CD4-positive, alpha-beta memory T cell (primary cell): ENCODE measurements at regions of chr2 and their contacts with region 1.

Region 1: DNA sequence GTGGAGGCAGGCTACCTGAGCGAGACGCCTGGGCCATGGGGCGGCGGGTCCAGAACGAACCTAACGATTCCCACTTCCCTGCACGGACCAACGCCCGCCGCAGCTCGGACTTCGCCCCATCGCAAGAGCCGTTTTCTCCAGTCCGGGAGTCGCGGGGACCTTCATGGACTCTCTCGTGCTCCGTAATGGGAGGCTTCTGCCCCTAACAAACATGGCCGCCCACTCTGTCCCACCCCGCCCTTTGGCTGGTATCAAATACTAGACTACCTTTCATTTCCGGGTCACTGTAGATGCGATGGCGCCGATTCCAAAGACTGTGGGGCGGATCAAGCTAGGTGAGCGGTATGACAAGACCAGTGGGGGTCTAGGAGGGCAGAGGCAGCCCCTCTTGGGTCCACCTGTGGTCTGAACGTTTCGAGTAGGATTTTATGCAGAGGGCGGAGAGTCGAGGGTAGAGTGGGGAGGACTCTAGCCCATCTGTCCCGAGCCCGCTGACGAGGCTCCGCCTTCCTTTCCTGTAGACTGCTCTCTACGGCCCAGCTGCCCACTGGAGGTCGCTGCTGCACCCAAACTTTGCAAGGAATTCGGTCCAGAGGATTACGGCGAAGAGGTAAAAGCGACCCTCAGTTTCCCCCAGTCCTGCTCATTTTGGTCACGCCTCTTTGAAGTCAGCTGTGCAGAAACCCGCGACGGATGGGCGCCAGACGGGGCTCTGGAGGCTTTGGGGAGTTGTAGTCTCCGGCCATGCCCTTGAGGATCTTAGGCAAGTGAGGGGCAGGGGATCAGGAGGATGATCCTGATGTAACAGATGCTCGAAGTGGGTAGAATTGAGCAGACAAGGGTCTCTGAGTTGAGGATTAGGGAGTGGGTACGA is at the starts of genes CCDC142 and TTC31:
- DNase-seq: peak; percentile 94 to 98 (median 96)
- H3K4me3 ChIP-seq: peak within 1 kb of the TSS; percentile 57 to 100
- H3K4me3 Mint-ChIP-seq: peak within 1 kb of the TSS; percentile 99 to 100 (median 100)
- H3K27ac ChIP-seq: peak within 1 kb of the TSS; percentile 91
- H3K27ac Mint-ChIP-seq: peak within 1 kb of the TSS; percentile 91 to 100 (median 100)
- H3K4me1 ChIP-seq: peaks cover 28% of the 10 kb centered on the region
- H3K4me1 Mint-ChIP-seq: peaks cover 17 to 43% (median 25%) of the 10 kb centered on the region in 4 donors
- H3K27me3 ChIP-seq: no peaks in the 10 kb centered on the region
- H3K27me3 Mint-ChIP-seq: no peaks in the 10 kb centered on the region
- total RNA-seq, gene CCDC142: 63.9 to 67.6 TPM
- total RNA-seq, gene TTC31: 43.7 to 46.9 TPM

Region 2: DNA sequence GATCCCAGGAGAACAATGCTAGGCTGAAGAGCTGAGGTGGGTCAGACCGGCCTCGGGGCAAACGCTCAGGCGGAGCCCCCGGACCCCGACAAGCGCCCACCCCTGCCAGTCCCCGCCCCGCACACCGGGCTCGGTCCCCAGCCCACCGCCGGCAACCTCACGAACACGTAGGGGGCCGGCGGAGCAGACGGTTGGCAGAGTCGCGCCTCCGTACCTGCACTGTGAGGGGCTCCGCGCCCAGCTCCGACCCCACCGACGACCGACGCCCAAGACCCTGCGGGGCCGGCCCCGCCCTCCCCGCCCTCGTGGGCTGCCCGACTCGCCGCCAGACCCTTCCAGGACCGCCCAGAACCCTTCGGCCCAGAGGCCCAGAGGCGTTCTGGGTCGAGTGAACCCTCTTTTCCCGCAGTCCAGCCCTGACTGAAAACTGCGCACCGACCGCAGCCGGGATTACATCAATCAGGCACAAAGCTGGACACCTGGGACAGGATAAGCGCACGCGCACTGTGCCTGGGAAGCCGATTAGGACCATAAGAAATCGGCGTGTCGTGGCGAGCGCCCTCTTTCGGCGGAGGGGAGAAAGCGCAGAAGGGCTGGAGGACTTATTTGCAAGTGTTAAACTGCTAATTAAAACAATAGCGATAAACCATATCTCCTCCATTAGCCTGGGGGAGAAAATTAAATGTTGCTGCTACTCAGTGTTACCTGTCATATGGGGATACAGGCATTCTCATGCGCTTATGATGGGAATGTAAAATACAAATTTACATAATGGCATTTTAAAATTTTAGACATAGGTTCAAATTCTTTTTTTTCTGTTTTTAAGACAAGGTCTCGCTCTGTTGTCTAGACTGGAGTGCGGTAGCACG is 91.2 kb before region 1 on chr2:
- CTCF ChIA-PET with region 1: no interaction called
- POLR2A ChIA-PET with region 1: interaction called, 5 read pairs
- intact Hi-C with region 1: loop called (anchors 1 kb)
- DNase-seq: peak; percentile 92 to 96 (median 94)
- H3K4me3 ChIP-seq: peak overlapping the region; percentile 84 to 90
- H3K4me3 Mint-ChIP-seq: peak overlapping the region in 5 of 8 donors; percentile 96 to 99 (median 97)
- H3K27ac ChIP-seq: peak overlapping the region; percentile 88
- H3K27ac Mint-ChIP-seq: peak overlapping the region in 6 of 7 donors; percentile 99 to 100 (median 100)
- H3K4me1 ChIP-seq: peaks cover 27% of the 10 kb centered on the region
- H3K4me1 Mint-ChIP-seq: peaks cover 5 to 13% (median 6%) of the 10 kb centered on the region in 4 donors
- H3K27me3 ChIP-seq: no peaks in the 10 kb centered on the region
- H3K27me3 Mint-ChIP-seq: peaks cover 0 to 5% of the 10 kb centered on the region in 2 donors

Region 3: DNA sequence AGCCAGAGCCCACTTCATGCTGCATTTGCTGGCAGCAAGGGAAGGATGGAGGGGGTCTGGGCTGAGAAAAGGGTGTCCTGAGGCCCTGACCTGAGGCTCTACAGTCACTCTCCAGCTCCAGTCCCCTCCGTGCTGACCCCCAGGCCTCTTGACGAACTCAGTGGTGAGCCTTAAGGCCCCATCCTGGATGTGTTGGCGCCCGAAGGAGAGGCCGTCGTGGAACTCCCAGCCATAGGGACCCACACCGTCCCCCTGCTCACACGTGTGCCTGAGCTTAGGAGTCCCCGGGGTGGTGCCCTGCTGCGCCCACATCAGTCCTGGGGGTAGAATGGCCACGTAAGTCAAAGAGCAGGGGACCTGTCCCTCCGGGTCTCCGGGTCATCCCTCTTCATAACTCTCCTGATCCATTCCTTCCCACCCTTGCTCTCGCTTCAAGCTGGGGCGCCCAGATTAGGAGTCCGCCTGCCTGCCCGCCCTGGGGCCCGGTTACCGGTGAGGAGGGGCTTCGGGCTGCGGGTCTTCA is 18.6 kb before region 1 on chr2:
- CTCF ChIA-PET with region 1: interaction called, 19 read pairs
- POLR2A ChIA-PET with region 1: interaction called, 516 read pairs
- intact Hi-C with region 1: no loop called
- DNase-seq: no peak
- H3K4me3 ChIP-seq: peak overlapping the region; percentile 52 to 88
- H3K4me3 Mint-ChIP-seq: peak overlapping the region; percentile 77 to 98 (median 92)
- H3K27ac ChIP-seq: peak overlapping the region; percentile 90
- H3K27ac Mint-ChIP-seq: peak overlapping the region; percentile 74 to 99 (median 81)
- H3K4me1 ChIP-seq: peaks cover 26% of the 10 kb centered on the region
- H3K4me1 Mint-ChIP-seq: peaks cover 12 to 36% (median 25%) of the 10 kb centered on the region in 4 donors
- H3K27me3 ChIP-seq: no peaks in the 10 kb centered on the region
- H3K27me3 Mint-ChIP-seq: no peaks in the 10 kb centered on the region

Region 4: GRCh38 chr2:74507145-74507925 is 24.3 kb after region 1 on chr2 and contains the start of gene PCGF1:
- CTCF ChIA-PET with region 1: interaction called, 9 read pairs
- POLR2A ChIA-PET with region 1: interaction called, 60 read pairs
- intact Hi-C with region 1: loop called (anchors 1 kb)
- DNase-seq: peak; percentile 98 to 99 (median 98)
- H3K4me3 ChIP-seq: peak within 1 kb of the TSS; percentile 83 to 97
- H3K4me3 Mint-ChIP-seq: peak within 1 kb of the TSS; percentile 98 to 100 (median 100)
- H3K27ac ChIP-seq: peak within 1 kb of the TSS; percentile 98
- H3K27ac Mint-ChIP-seq: peak within 1 kb of the TSS; percentile 97 to 100 (median 100)
- H3K4me1 ChIP-seq: peaks cover 40% of the 10 kb centered on the region
- H3K4me1 Mint-ChIP-seq: peaks cover 18 to 64% (median 46%) of the 10 kb centered on the region in 4 donors
- H3K27me3 ChIP-seq: peaks cover 19% of the 10 kb centered on the region
- H3K27me3 Mint-ChIP-seq: peaks cover 16 to 45% of the 10 kb centered on the region in 2 donors
- total RNA-seq, gene PCGF1: 31.1 to 42.2 TPM

Region 5: DNA sequence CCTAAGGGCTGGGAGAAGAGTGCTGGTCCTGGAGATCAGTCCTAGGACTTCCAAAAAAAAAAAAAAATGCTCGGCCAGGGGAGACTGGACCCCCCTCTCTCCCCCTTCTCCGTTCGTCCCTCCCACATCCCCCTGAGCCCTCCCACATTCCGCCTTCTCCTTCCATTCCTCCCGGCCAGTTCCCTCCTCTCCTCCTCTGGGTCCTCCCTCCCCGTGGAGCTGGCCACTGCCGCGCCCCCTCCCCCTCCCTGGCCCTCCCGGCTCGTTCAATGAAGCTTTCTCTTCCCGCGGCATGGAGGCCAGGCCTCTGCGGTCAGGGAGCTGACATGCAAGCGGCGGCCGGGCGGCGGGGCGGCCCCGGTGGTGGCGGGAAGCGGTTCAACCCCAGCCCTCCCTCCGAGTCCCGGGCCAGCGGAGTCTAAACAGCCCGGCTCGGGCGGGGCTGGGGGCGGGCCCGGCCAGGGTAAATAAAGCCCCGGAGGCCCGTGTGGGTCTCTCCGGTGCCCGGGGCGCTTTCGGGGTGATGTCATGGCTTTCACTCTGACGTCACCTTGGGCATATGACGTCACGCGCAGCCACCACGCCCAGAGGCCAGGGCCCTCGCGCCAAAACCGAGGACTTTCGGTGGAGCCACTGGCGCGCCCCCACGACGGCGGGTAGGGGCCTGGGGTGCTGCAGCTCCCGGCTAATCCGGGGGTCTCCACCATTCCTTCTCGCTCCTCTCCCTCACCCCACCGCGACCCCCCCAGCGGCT is 71.0 kb after region 1 on chr2 and contains the start of gene LOXL3:
- CTCF ChIA-PET with region 1: no interaction called
- POLR2A ChIA-PET with region 1: interaction called, 4 read pairs
- intact Hi-C with region 1: loop called (anchors 2 kb)
- DNase-seq: peak; percentile 79 to 84 (median 82)
- H3K4me3 ChIP-seq: peak within 1 kb of the TSS; percentile 84 to 99
- H3K4me3 Mint-ChIP-seq: peak within 1 kb of the TSS; percentile 94 to 98 (median 96)
- H3K27ac ChIP-seq: peak within 1 kb of the TSS; percentile 64
- H3K27ac Mint-ChIP-seq: peak within 1 kb of the TSS; percentile 73 to 98 (median 93)
- H3K4me1 ChIP-seq: peaks cover 23% of the 10 kb centered on the region
- H3K4me1 Mint-ChIP-seq: peaks cover 7 to 35% (median 19%) of the 10 kb centered on the region in 4 donors
- H3K27me3 ChIP-seq: peaks cover 16% of the 10 kb centered on the region
- H3K27me3 Mint-ChIP-seq: peaks cover 11 to 25% of the 10 kb centered on the region in 2 donors
- total RNA-seq, gene LOXL3: 0.25 to 0.32 TPM

Region 6: DNA sequence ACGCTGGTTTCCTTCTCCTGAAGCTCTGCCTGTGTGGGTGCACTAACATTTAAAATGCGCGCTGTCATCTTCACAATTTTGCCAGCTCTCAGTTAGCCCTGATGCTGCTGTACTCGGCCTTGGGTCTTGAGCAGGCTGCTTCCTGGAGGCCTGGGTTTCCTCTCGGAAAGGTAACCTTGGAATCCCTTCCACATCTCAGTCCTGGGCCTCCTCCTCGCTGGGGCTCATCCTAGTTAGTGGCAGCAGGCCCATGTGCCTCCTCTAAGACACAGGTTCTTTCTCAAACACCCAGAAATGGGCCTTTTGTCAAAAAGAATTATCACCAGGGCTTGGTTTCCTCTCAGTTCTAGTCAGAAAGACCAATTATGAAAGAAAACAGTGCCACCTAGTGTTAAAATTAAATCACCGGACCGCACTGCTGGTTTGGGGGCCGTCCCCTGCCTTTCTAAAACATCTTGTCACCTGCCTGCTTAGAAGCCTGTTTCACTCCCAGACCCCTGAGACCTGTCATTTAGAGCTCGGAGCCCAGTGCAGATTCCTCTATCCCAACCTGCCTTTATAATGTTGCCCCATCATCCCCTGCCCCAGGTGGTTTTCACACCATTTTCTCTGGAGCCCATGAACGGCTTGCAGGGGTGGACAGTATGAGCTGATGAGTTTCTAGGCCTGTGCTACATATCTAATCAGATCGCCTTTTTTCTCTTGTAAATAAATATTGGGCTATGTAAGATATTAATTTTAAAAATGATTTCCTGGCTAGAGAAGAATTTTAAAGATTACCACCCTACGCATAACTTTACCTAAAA is 393.2 kb after region 1 on chr2:
- CTCF ChIA-PET with region 1: interaction called, 4 read pairs
- POLR2A ChIA-PET with region 1: no interaction called
- intact Hi-C with region 1: loop called (anchors 1 kb)
- DNase-seq: peak; percentile 48 to 73 (median 66)
- H3K4me3 ChIP-seq: no peak overlapping the region
- H3K4me3 Mint-ChIP-seq: no peak overlapping the region
- H3K27ac ChIP-seq: no peak overlapping the region
- H3K27ac Mint-ChIP-seq: peak overlapping the region in 3 of 7 donors; percentile 22 to 76 (median 53)
- H3K4me1 ChIP-seq: peaks cover 3% of the 10 kb centered on the region
- H3K4me1 Mint-ChIP-seq: peaks cover 0 to 7% (median 4%) of the 10 kb centered on the region in 4 donors
- H3K27me3 ChIP-seq: no peaks in the 10 kb centered on the region
- H3K27me3 Mint-ChIP-seq: no peaks in the 10 kb centered on the region